PC-9 (cell line): ENCODE measurements at regions of chr13 and their contacts with region 1.

Region 1: DNA sequence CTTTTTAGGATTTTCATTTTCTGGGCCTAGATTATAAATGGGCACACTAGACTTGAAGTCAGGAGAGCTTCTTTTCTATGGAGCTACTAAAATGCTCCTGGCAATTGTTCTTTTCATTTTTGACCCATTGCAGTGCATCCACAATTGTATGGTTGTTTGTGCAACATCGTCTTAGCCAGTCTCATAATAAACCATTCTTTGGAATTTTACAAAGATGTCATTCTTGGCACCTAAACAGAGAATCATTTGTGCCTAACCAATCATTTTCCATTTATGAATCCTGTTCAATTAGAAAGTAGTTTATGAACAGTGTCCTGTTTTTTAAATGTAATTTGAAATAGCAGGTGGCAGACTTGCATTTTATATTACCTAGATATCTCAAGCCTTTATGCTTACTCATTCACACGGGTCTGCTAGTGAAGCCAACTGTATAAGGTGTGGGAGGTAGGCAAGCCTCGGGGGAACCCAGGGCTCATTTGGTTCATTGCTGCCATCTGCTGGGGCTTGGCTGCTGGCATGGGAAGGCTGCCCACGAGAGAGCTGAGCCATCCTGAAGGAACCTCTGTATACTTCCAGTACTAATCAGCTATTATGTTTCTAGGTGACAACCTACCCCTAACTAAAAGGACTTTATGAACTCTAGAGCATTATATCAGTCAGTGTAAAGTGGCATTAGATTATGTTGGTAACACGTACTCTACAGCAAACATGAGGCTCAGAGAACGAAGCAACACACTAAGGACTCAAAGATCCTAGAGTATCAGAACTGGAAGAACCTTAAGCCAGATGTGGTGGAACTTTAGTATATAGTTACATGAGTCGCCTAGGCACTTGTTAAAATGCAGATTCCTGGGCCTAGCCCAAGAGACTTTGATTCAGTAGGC is 60.0 kb downstream of the TPT1 start:
- DNase-seq: peak; percentile 75 to 82
- H3K4me3 ChIP-seq: no peak overlapping the region
- H3K27ac ChIP-seq: peak overlapping the region; percentile 47
- H3K4me1 ChIP-seq: peaks cover 8% of the 10 kb centered on the region
- H3K27me3 ChIP-seq: no peaks in the 10 kb centered on the region
- CTCF ChIP-seq: peak; percentile 83

Region 2: GRCh38 chr13:44075113-44075512 is 1205.9 kb before region 1 on chr13:
- CTCF ChIA-PET with region 1: no interaction called
- POLR2A ChIA-PET with region 1: no interaction called
- intact Hi-C with region 1: no loop called
- DNase-seq: no peak
- H3K4me3 ChIP-seq: no peak overlapping the region
- H3K27ac ChIP-seq: no peak overlapping the region
- H3K4me1 ChIP-seq: no peaks in the 10 kb centered on the region
- H3K27me3 ChIP-seq: no peaks in the 10 kb centered on the region
- CTCF ChIP-seq: no peak

Region 3: GRCh38 chr13:45119991-45120864 is 160.8 kb before region 1 on chr13 and contains the start of gene GTF2F2:
- CTCF ChIA-PET with region 1: no interaction called
- POLR2A ChIA-PET with region 1: no interaction called
- intact Hi-C with region 1: loop called (anchors 1 kb)
- DNase-seq: peak; percentile 79 to 89
- H3K4me3 ChIP-seq: peak within 1 kb of the TSS; percentile 96
- H3K27ac ChIP-seq: peak within 1 kb of the TSS; percentile 74
- H3K4me1 ChIP-seq: peaks cover 18% of the 10 kb centered on the region
- H3K27me3 ChIP-seq: no peaks in the 10 kb centered on the region
- CTCF ChIP-seq: no peak
- total RNA-seq, gene GTF2F2: 26.5 and 28.8 TPM in 2 replicates

Region 4: GRCh38 chr13:45167611-45168556 is 113.1 kb before region 1 on chr13:
- CTCF ChIA-PET with region 1: no interaction called
- POLR2A ChIA-PET with region 1: no interaction called
- intact Hi-C with region 1: loop called (anchors 2 kb)
- DNase-seq: peak; percentile 84 to 98
- H3K4me3 ChIP-seq: peak overlapping the region; percentile 22; the same call in 1 of the 2 replicates
- H3K27ac ChIP-seq: peak overlapping the region; percentile 84
- H3K4me1 ChIP-seq: peaks cover 52% of the 10 kb centered on the region
- H3K27me3 ChIP-seq: no peaks in the 10 kb centered on the region
- CTCF ChIP-seq: no peak

Region 5: GRCh38 chr13:45185286-45185685 is 95.7 kb before region 1 on chr13:
- CTCF ChIA-PET with region 1: interaction called, 15 read pairs
- POLR2A ChIA-PET with region 1: no interaction called
- intact Hi-C with region 1: no loop called
- DNase-seq: no peak
- H3K4me3 ChIP-seq: no peak overlapping the region
- H3K27ac ChIP-seq: no peak overlapping the region
- H3K4me1 ChIP-seq: peaks cover 15% of the 10 kb centered on the region
- H3K27me3 ChIP-seq: no peaks in the 10 kb centered on the region
- CTCF ChIP-seq: no peak

Region 6: DNA sequence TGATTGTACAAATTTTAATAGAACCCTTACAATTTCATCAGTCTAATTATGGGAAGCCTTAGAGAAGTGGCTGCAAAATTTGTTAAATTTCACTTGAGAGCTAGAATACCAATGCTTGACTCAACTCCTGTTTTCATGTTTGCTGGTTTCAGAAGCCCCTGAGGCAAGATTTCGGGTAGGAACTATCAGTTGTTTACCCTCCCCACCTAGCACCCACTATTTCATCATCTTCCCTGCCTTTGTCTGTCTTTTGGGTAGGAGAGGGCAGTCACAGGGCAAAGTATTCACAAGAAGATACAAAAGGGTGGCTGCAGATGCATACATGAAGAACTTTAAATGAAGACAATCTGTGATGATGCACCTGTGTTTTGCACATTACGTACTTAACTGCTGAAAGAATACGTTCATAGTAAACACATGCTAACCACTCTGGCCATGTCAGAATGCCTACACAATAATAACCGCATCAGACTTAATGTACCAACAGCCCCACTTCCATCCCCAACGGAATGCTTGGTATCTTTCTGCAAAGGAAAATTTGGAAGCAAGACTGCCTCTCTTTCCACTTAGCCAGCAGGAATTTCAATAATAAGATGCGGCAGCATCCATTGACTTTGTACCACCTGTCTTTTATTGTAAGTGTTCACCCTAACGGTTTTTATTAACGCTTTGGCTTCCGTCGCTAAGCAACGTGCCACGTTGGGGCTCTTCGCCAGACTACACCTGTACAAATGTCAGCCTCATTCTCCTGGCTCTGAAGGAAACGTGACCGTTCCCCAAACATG is 29.5 kb after region 1 on chr13:
- CTCF ChIA-PET with region 1: no interaction called
- POLR2A ChIA-PET with region 1: no interaction called
- intact Hi-C with region 1: loop called (anchors 1 kb)
- DNase-seq: no peak
- H3K4me3 ChIP-seq: peak overlapping the region; percentile 43; the same call in 1 of the 2 replicates
- H3K27ac ChIP-seq: no peak overlapping the region
- H3K4me1 ChIP-seq: peaks cover 15% of the 10 kb centered on the region
- H3K27me3 ChIP-seq: no peaks in the 10 kb centered on the region
- CTCF ChIP-seq: no peak

Region 7: GRCh38 chr13:45786293-45786920 is 505.4 kb after region 1 on chr13:
- CTCF ChIA-PET with region 1: no interaction called
- POLR2A ChIA-PET with region 1: no interaction called
- intact Hi-C with region 1: no loop called
- DNase-seq: no peak
- H3K4me3 ChIP-seq: no peak overlapping the region
- H3K27ac ChIP-seq: no peak overlapping the region
- H3K4me1 ChIP-seq: no peaks in the 10 kb centered on the region
- H3K27me3 ChIP-seq: peaks cover 78% of the 10 kb centered on the region
- CTCF ChIP-seq: no peak